ENCODE measurements at regions of chr3 and their contacts with region 1.

Region 1: GRCh38 chr3:184561061-184561912 is at the start of gene EPHB3:
- DNase-seq: peak; percentile 90
- H3K4me3 Mint-ChIP-seq: peak within 1 kb of the TSS; percentile 51
- H3K27ac Mint-ChIP-seq: peak within 1 kb of the TSS; percentile 22
- H3K4me1 Mint-ChIP-seq: peaks cover 33% of the 10 kb centered on the region
- H3K27me3 Mint-ChIP-seq: peaks cover 46% of the 10 kb centered on the region
- total RNA-seq, gene EPHB3: 0.12 to 0.22 TPM

Region 2: DNA sequence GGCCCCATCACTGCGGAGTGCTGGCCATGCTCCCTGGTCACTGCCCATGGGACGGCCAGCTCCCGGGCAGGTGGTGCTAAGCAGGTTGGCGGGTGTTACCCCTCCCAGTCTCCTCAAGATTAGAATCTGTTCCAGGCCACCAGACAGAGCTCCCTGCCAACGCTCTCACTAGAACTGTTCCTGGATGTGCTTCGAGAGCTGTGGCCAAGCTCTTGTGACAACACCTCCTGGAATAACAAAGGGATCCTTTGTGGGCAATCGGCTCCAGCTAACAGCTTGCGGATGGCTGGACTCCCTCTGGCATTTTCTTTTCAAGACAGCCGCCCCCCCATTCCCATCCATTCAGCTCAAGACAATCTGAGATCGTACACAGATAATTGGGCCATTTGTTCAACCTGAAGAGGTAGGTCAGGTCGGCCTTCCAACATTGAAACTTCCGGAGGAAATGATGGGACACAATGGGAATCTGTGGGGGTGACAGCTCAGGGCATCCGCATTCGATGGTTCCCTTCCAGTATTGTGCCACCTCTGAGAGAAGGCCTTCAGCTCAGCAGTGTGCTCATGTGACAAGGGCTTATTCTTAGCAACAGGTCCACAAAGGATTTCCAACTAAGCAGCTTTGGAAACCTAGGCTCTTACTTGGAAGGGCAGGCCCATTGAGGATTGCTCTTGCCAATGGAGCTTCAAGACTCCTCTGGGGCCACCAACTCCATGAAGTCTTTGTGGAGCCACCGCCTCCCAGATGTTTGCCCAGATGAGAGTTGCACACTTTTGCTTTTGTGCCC is 11.3 kb before region 1 on chr3:
- CTCF ChIA-PET with region 1: interaction called, 14 read pairs
- POLR2A ChIA-PET with region 1: no interaction called
- DNase-seq: no peak
- H3K4me3 Mint-ChIP-seq: no peak overlapping the region
- H3K27ac Mint-ChIP-seq: no peak overlapping the region
- H3K4me1 Mint-ChIP-seq: no peaks in the 10 kb centered on the region
- H3K27me3 Mint-ChIP-seq: peaks cover 3% of the 10 kb centered on the region

Region 3: GRCh38 chr3:184574515-184575417 is 13.5 kb after region 1 on chr3:
- CTCF ChIA-PET with region 1: interaction called, 11 read pairs
- POLR2A ChIA-PET with region 1: no interaction called
- DNase-seq: no peak
- H3K4me3 Mint-ChIP-seq: no peak overlapping the region
- H3K27ac Mint-ChIP-seq: no peak overlapping the region
- H3K4me1 Mint-ChIP-seq: no peaks in the 10 kb centered on the region
- H3K27me3 Mint-ChIP-seq: peaks cover 20% of the 10 kb centered on the region

Region 4: DNA sequence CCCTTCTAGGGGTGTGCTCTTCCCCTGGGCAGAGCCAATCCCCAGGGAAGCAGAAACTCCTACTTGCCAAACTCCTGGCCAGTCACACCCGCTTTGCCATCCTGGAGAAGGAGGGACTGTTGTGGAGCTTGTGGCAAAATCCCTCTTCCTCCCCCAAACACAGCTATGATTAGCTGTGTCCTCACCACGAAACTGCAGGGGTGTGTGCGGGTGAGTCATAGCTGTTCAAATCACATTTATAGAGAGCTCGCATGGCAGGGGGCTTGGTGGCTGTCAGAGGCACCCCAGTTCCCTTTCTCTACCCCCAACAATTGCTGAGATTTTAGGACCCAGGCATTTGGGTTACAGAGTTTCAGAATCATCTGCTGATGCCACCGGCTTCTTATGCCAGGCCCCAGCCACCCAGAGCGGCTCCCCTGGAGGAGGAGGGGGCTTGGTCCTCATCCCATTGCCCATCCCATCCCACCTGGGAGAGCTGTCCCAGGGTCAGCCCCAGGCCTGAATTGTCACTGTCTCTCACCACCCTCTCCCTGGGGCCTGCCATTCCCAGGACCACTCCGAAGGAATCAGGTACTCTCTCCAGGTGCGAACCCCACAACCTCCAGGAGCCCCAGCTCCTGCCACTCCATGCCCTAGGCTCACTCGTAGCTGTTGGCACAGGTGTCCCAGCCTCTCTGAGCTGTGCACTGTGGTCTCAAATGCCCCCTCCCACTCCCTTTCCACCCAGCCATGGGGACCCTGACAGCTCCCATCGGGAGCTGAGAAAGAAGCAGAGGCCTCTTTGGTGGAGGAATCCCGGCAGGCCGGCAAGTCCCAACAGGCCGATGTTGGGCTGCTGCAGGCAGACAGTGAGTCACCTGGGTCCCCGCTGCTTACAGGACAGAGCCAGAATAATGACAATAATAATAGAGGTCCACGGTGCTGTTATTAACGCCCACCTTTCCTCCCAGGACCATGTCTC is 179.5 kb after region 1 on chr3:
- CTCF ChIA-PET with region 1: interaction called, 17 read pairs
- POLR2A ChIA-PET with region 1: no interaction called
- DNase-seq: no peak
- H3K4me3 Mint-ChIP-seq: no peak overlapping the region
- H3K27ac Mint-ChIP-seq: no peak overlapping the region
- H3K4me1 Mint-ChIP-seq: no peaks in the 10 kb centered on the region
- H3K27me3 Mint-ChIP-seq: peaks cover 5% of the 10 kb centered on the region

Region 5: GRCh38 chr3:184771301-184772127 is 210.2 kb after region 1 on chr3:
- CTCF ChIA-PET with region 1: interaction called, 12 read pairs
- POLR2A ChIA-PET with region 1: no interaction called
- DNase-seq: no peak
- H3K4me3 Mint-ChIP-seq: no peak overlapping the region
- H3K27ac Mint-ChIP-seq: no peak overlapping the region
- H3K4me1 Mint-ChIP-seq: peaks cover 6% of the 10 kb centered on the region
- H3K27me3 Mint-ChIP-seq: no peaks in the 10 kb centered on the region

Region 6: GRCh38 chr3:184811999-184812661 is 250.8 kb after region 1 on chr3 and contains the start of gene VPS8:
- CTCF ChIA-PET with region 1: interaction called, 12 read pairs
- POLR2A ChIA-PET with region 1: no interaction called
- DNase-seq: peak; percentile 97
- H3K4me3 Mint-ChIP-seq: peak within 1 kb of the TSS; percentile 92
- H3K27ac Mint-ChIP-seq: peak within 1 kb of the TSS; percentile 96
- H3K4me1 Mint-ChIP-seq: peaks cover 56% of the 10 kb centered on the region
- H3K27me3 Mint-ChIP-seq: no peaks in the 10 kb centered on the region
- total RNA-seq, gene VPS8: 63.0 to 69.3 TPM